Heart left ventricle (tissue), 16 donors: ENCODE measurements at regions of chr3 and their contacts with region 1.

Region 1: GRCh38 chr3:106428565-106428994 is 559.8 kb upstream of the CBLB start:
- DNase-seq: peak in 2 of 5 donors; percentile 7 to 35
- ATAC-seq: peak; percentile 58 to 94 (median 71)
- H3K4me3 ChIP-seq: no peak overlapping the region
- H3K27ac ChIP-seq: peak overlapping the region in 2 of 12 donors; percentile 5 to 9
- H3K4me1 ChIP-seq: peaks cover 0 to 9% (median 0%) of the 10 kb centered on the region in 12 donors
- H3K27me3 ChIP-seq: no peaks in the 10 kb centered on the region
- CTCF ChIP-seq: no peak
- POLR2A ChIP-seq: no peak

Region 2: GRCh38 chr3:106004137-106004681 is 424.4 kb before region 1 on chr3:
- intact Hi-C with region 1: loop called in 1 of 10 experiments (anchors 5 kb)
- DNase-seq: no peak
- ATAC-seq: peak in 3 of 4 donors; percentile 75 to 87 (median 76)
- H3K4me3 ChIP-seq: peak overlapping the region in 9 of 12 donors; percentile 27 to 54 (median 34)
- H3K27ac ChIP-seq: peak overlapping the region in 11 of 12 donors; percentile 3 to 81 (median 52)
- H3K4me1 ChIP-seq: peaks cover 0 to 20% (median 3%) of the 10 kb centered on the region in 12 donors
- H3K27me3 ChIP-seq: no peaks in the 10 kb centered on the region
- CTCF ChIP-seq: no peak
- POLR2A ChIP-seq: no peak

Region 3: GRCh38 chr3:106305882-106306435 is 122.6 kb before region 1 on chr3:
- intact Hi-C with region 1: no loop called
- DNase-seq: no peak
- ATAC-seq: no peak
- H3K4me3 ChIP-seq: no peak overlapping the region
- H3K27ac ChIP-seq: no peak overlapping the region
- H3K4me1 ChIP-seq: peaks cover 0 to 3% (median 0%) of the 10 kb centered on the region in 12 donors
- H3K27me3 ChIP-seq: no peaks in the 10 kb centered on the region
- CTCF ChIP-seq: no peak
- POLR2A ChIP-seq: no peak